Activated CD4-positive, alpha-beta T cell treated with anti-CD3 and anti-CD28 coated beads, Interleukin-2, amount 10 ng/mL, durations not matched to agents 24 days and 14 days (primary cell): ENCODE measurements at regions of chr7 and their contacts with region 1.

Region 1: DNA sequence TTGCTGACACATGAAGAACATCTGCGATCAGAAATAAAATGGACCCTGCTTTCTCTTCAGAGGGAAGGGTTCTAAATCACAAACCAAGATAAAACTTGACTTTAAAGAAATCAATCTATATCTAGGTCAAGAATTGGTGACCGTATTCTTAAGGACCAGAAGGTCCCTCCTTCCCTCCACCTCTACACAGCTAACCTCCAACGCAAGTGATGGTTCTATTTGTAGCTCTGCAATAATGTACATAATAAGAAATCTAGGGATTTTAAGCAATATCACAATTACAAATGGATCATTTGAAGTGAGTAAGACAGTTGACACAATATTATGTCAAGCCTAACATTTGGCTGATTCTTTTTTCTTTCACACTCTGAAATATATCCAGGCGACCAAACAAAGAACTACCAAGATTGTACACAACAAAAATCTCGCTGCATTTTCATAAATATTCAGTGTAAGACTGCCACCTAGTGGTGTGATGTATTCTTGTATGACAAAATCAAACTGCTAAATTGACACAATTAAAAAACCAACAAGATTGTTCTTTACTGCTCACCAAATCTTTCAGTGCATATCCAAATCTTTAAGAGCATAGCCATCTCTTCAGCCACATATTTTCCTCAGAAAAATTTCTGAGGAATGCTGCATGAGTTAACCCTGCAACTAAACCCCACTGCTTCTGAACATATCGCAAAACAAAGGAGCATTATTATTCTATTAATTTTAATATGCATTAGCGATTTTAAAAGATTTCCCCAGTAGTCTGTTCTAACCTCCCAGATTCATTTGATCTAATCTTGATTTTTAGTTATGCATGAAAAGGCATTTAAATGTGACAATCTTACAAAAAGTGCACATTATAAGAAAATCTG is 44.5 kb downstream of the ICA1 start:
- DNase-seq: peak; percentile 86
- H3K4me3 Mint-ChIP-seq: no peak overlapping the region
- H3K27ac Mint-ChIP-seq: no peak overlapping the region
- H3K4me1 Mint-ChIP-seq: peaks cover 4% of the 10 kb centered on the region
- H3K27me3 Mint-ChIP-seq: no peaks in the 10 kb centered on the region

Region 2: DNA sequence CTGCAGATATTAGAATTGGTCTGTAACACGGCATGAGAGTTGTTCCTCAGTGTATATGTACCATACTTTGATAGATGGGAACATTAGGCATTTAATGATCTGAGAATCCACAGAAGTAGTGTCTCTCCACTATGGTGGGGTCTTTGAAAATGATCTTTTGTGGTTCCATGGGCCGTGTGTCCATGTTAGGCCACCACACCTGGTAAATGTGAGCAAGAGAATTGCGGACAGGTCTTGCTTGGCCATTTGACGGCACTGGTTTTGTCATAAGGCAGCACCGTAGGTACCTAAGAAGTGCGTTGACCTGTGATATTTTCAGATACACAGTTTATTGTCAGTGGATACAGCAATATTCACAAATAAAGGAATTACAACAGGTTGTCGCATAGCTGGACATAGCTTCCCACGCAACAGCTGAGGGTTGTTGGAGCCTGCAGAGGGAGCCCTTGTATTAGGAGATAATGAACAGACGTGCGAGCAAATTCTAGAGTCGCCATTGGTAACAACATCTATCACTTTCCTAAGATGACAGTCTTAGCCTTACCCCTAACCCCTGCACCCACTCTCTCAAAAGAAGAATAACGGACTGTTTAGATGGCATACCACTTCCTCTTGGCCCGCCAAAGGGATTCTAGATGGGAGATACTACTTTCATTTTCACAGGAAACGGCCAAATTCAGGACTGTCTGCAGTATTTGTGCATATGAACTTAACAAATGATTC is 793.1 kb before region 1 on chr7:
- intact Hi-C with region 1: loop called (anchors 10 kb)
- DNase-seq: peak; percentile 69
- H3K4me3 Mint-ChIP-seq: peak overlapping the region; percentile 68
- H3K27ac Mint-ChIP-seq: no peak overlapping the region
- H3K4me1 Mint-ChIP-seq: peaks cover 5% of the 10 kb centered on the region
- H3K27me3 Mint-ChIP-seq: peaks cover 5% of the 10 kb centered on the region

Region 3: GRCh38 chr7:7595451-7595850 is 622.0 kb before region 1 on chr7:
- intact Hi-C with region 1: loop called (anchors 1 kb)
- DNase-seq: no peak
- H3K4me3 Mint-ChIP-seq: no peak overlapping the region
- H3K27ac Mint-ChIP-seq: no peak overlapping the region
- H3K4me1 Mint-ChIP-seq: peaks cover 3% of the 10 kb centered on the region
- H3K27me3 Mint-ChIP-seq: no peaks in the 10 kb centered on the region

Region 4: DNA sequence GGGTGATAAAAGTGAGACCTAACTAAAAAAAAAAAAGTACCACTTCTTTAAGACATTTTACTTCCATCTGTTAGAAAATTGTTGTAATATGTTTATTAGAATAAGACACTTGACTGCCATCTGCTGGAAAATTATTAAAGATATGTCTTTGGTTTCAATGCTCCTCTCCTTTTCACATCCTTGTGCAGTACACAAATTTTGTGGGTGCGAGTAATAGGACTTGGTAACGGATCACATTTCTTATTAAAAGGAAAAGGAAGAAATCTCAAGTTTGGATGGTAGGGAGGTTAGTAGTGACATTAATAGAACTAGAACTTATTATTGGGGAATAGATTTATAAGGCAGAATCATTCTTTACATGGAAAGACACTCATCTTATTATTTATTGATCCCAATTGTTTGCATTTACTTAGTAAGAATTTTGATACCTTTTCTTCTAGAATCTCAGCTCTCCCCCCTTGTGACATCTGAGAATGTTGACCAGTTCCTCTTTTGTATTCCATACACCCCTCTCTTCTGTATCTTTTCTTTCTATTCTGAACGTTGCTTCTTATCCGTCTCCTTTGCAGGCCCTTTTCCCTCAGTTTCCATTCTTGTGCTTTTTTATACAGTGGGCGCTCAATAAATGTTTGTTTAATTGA is 456.0 kb before region 1 on chr7:
- intact Hi-C with region 1: loop called (anchors 1 kb)
- DNase-seq: peak; percentile 59
- H3K4me3 Mint-ChIP-seq: peak overlapping the region; percentile 92
- H3K27ac Mint-ChIP-seq: peak overlapping the region; percentile 88
- H3K4me1 Mint-ChIP-seq: peaks cover 30% of the 10 kb centered on the region
- H3K27me3 Mint-ChIP-seq: no peaks in the 10 kb centered on the region